Esophagus muscularis mucosa (tissue), 4 donors: ENCODE measurements at regions of chr18 and their contacts with region 1.

Region 1: GRCh38 chr18:35939138-35939537 is 33.3 kb upstream of the RMP24 start:
- DNase-seq: peak; percentile 86
- H3K4me3 ChIP-seq: no peak overlapping the region
- H3K27ac ChIP-seq: peak overlapping the region; percentile 33 to 49 (median 41)
- H3K4me1 ChIP-seq: peaks cover 0 to 22% (median 18%) of the 10 kb centered on the region in 4 donors
- H3K27me3 ChIP-seq: no peaks in the 10 kb centered on the region
- CTCF ChIP-seq: peak; percentile 23 to 40 (median 24)
- EP300 ChIP-seq: no peak
- POLR2A ChIP-seq: no peak

Region 2: DNA sequence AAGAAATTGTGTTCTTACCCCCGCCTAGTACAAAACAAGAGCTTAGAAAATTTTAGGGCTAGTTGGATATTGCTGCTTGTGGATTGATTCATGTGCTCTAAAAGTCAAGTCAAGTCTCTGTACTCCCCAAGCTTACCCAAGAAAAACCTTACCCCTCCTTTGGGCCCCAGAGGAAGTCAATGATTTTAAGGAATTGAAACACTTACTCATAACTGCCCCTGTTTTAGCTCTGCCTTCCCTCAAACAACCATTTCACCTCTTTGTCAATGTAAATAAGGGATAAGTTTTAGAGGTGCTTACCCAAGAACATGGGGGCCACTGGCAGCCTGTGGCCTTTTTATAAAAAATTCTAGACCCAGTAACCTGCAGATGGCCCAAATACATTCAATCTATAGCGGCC is 103.3 kb before region 1 on chr18:
- intact Hi-C with region 1: loop called (anchors 10 kb)
- DNase-seq: no peak
- H3K4me3 ChIP-seq: no peak overlapping the region
- H3K27ac ChIP-seq: no peak overlapping the region
- H3K4me1 ChIP-seq: peaks cover 0 to 11% (median 0%) of the 10 kb centered on the region in 4 donors
- H3K27me3 ChIP-seq: no peaks in the 10 kb centered on the region
- CTCF ChIP-seq: no peak
- EP300 ChIP-seq: no peak
- POLR2A ChIP-seq: no peak